A549 (cell line): ENCODE measurements at regions of chr17 and their contacts with region 1.

Region 1: GRCh38 chr17:199191-199604 is 17.7 kb upstream of the DOC2B start:
- DNase-seq: no peak
- ATAC-seq: peak in 1 of 2 experiments; percentile 10; a peak in 2 of 6 replicates
- H3K4me3 ChIP-seq: no peak overlapping the region
- H3K27ac ChIP-seq: no peak overlapping the region; a peak in 1 of 6 replicates
- H3K4me1 ChIP-seq: no peaks in the 10 kb centered on the region
- CTCF ChIP-seq: no peak
- EP300 ChIP-seq: no peak
- POLR2A ChIP-seq: no peak
- RAD21 ChIP-seq: no peak

Region 2: DNA sequence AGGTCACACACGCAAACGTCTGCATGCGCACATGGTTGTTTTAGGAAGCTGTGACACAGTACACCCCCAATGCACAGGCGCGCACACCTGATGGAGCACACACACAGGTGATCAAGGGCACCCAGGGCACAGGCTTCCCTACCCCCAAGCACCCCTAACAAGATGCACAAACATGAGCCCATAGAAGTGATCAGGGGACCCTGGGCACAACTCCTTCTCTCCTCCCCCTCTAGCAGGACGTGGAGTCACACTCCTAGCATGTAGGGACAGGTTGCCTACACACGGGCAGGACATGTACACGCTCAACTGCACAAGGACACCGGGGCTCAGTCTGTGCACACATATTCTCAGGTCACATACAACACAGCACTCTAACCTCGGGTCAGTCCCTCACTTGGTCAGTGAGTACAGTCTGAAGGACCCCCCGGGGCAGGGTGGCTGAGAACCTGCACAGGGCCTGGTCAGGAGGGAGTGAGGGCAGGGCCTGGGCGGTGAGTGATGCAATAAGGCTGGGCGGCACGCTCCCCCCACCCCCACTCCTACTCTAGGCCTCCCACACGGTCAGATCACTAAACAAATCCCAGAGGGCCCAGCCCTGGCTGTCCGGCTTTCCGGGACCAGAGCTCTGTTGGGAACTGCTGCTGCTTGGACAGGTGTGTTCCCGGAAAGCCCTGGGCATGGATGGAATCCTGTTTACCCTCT is 17.0 kb before region 1 on chr17:
- CTCF ChIA-PET with region 1: interaction called, 12 read pairs
- POLR2A ChIA-PET with region 1: interaction called, 11 read pairs
- DNase-seq: no peak
- ATAC-seq: no peak; a peak in 2 of 6 replicates
- H3K4me3 ChIP-seq: peak overlapping the region; percentile 58; the same call in 2 of the 3 replicates
- H3K27ac ChIP-seq: no peak overlapping the region; a peak in 1 of 6 replicates
- H3K4me1 ChIP-seq: peaks cover 11% of the 10 kb centered on the region; the same call in 1 of the 3 replicates
- CTCF ChIP-seq: no peak
- EP300 ChIP-seq: no peak
- POLR2A ChIP-seq: no peak
- RAD21 ChIP-seq: no peak

Region 3: GRCh38 chr17:444879-445454 is 245.8 kb after region 1 on chr17:
- CTCF ChIA-PET with region 1: no interaction called
- POLR2A ChIA-PET with region 1: no interaction called
- DNase-seq: no peak
- ATAC-seq: no peak
- H3K4me3 ChIP-seq: no peak overlapping the region
- H3K27ac ChIP-seq: no peak overlapping the region
- H3K4me1 ChIP-seq: no peaks in the 10 kb centered on the region
- CTCF ChIP-seq: no peak
- EP300 ChIP-seq: no peak
- POLR2A ChIP-seq: no peak
- RAD21 ChIP-seq: no peak